PC-3 (cell line): ENCODE measurements at regions of chr19 and their contacts with region 1.

Region 1: GRCh38 chr19:21020298-21021227 is at the start of gene ZNF430:
- DNase-seq: peak; percentile 97
- ATAC-seq: peak; percentile 85
- H3K4me3 ChIP-seq: peak within 1 kb of the TSS; percentile 81
- H3K27ac ChIP-seq: peak within 1 kb of the TSS; percentile 98
- H3K4me1 ChIP-seq: peaks cover 36% of the 10 kb centered on the region
- H3K27me3 ChIP-seq: no peaks in the 10 kb centered on the region
- CTCF ChIP-seq: no peak
- total RNA-seq, gene ZNF430: 9.7 and 9.8 TPM in 2 replicates

Region 2: DNA sequence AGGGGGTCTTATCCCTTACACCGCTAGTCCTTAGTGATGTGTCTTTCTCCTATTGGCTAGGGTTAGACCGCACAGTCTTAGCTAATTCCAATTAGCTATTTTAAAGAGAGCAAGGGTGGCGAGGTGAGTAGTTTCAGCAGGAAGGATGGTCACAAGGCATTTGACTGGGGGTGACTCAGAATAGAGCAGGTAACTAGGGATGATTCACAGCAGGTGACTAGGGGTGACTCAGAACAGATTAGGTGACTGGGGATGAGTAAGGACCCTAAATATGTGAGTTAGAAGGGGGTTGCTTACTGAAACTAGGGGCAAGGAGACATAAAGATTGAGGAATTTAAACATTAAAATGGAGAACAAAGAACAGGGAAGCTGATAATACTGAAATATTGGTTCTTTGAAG is 180.2 kb before region 1 on chr19:
- CTCF ChIA-PET with region 1: no interaction called
- POLR2A ChIA-PET with region 1: no interaction called
- intact Hi-C with region 1: loop called (anchors 10 kb)
- DNase-seq: peak; percentile 82
- ATAC-seq: peak; percentile 85
- H3K4me3 ChIP-seq: no peak overlapping the region
- H3K27ac ChIP-seq: peak overlapping the region; percentile 59
- H3K4me1 ChIP-seq: 0 out of 2 replicates have a peak, but pooled peaks cover 4% of the 10 kb centered on the region
- H3K27me3 ChIP-seq: no peaks in the 10 kb centered on the region
- CTCF ChIP-seq: no peak

Region 3: DNA sequence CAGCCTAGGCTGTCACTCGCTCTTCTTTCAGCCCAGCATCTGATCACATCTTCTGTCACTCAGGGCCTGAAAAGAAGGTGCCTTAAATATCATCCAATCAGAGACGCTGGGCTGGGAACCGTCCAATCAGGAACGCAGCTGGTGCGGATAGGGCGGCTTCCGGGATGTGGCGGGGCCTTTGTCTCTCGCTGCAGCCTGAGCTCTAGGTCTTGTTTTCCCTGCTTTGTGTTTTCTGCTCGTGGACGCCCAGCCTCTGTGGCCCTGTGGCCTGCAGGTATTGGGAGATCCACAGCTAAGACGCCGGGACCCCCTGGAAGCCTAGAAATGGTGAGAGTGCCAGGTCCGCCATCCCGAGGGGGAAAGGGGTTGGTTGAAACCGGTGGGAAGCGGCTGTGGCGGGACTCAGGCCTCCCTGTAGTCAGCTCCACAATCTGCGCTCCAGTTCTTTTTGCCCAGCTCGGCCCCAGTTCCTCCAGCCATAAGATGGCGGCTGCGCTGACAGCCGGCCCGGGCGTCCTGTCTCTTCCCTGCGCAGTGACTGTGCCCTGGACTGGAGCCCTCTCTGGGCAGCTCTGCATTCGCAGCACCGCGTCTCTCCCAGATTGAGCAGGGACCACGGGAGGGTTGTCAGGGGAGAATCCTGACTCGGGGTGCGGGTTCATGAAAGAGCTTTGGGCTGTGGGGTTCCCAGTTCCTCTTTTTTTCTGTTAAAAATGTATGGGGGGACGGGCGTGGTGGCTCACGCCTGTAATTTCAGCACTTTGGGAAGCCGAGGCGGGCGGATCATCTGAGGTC is 97.3 kb before region 1 on chr19 and contains the start of gene ZNF85:
- CTCF ChIA-PET with region 1: no interaction called
- POLR2A ChIA-PET with region 1: no interaction called
- intact Hi-C with region 1: loop called (anchors 5 kb)
- DNase-seq: peak; percentile 90
- ATAC-seq: peak; percentile 98
- H3K4me3 ChIP-seq: peak within 1 kb of the TSS; percentile 89
- H3K27ac ChIP-seq: peak within 1 kb of the TSS; percentile 52
- H3K4me1 ChIP-seq: no peaks in the 10 kb centered on the region
- H3K27me3 ChIP-seq: no peaks in the 10 kb centered on the region
- CTCF ChIP-seq: no peak
- total RNA-seq, gene ZNF85: 8.2 and 12.6 TPM in 2 replicates

Region 4: GRCh38 chr19:21328885-21329605 is 308.5 kb after region 1 on chr19 and contains the start of gene ZNF708:
- CTCF ChIA-PET with region 1: no interaction called
- POLR2A ChIA-PET with region 1: no interaction called
- intact Hi-C with region 1: loop called (anchors 5 kb)
- DNase-seq: peak; percentile 88
- ATAC-seq: peak; percentile 99
- H3K4me3 ChIP-seq: peak within 1 kb of the TSS; percentile 92
- H3K27ac ChIP-seq: peak within 1 kb of the TSS; percentile 67
- H3K4me1 ChIP-seq: no peaks in the 10 kb centered on the region
- H3K27me3 ChIP-seq: no peaks in the 10 kb centered on the region
- CTCF ChIP-seq: no peak
- total RNA-seq, gene ZNF708: 4.2 and 7.3 TPM in 2 replicates